OCI-LY7 (cell line): ENCODE measurements at regions of chr18 and their contacts with region 1.

Region 1: DNA sequence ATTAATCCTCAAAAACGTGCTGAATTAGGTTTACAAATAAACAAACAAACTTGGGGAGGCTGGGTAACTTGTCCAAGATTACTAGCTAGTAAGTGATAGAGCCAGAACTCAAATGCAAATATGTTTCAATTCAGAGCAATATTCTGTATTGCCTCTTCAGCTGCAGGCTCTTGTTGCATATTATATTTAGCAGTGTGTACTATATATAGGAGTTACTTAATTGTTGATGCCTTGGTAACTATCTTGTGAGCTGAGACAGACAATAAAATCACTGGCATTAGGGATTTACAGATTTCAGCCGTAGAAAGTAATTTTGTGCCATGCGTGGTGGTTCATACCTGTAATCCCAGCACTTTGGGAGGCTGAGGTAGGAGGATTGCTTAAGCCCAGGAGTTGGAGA is 10.2 kb upstream of the ANKRD12 start:
- DNase-seq: no peak
- H3K4me3 ChIP-seq: no peak overlapping the region
- H3K27ac ChIP-seq: no peak overlapping the region
- H3K4me1 ChIP-seq: no peaks in the 10 kb centered on the region
- CTCF ChIP-seq: no peak

Region 2: DNA sequence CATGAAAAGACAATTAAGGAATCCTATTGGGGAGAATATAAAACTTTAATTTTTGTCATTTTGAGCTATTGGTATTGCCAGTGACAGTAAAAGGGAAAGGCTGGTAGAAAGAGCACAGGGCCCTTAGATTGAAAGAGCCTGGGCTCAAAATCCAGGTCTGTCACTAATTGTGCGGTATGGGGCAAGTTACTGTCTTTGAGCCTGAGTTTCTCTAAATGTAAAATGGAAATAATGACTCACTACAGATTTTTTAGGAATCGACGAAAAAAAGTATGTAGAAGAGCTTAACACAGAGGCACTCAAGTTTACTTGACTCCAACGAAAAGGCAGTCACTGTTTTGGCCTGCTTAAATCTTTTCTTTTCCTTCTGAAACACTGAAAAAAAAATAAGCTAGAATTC is 16.8 kb before region 1 on chr18:
- CTCF ChIA-PET with region 1: interaction called, 4 read pairs
- POLR2A ChIA-PET with region 1: interaction called, 33 read pairs
- intact Hi-C with region 1: no loop called
- DNase-seq: no peak
- H3K4me3 ChIP-seq: no peak overlapping the region
- H3K27ac ChIP-seq: no peak overlapping the region
- H3K4me1 ChIP-seq: peaks cover 58% of the 10 kb centered on the region
- CTCF ChIP-seq: no peak

Region 3: DNA sequence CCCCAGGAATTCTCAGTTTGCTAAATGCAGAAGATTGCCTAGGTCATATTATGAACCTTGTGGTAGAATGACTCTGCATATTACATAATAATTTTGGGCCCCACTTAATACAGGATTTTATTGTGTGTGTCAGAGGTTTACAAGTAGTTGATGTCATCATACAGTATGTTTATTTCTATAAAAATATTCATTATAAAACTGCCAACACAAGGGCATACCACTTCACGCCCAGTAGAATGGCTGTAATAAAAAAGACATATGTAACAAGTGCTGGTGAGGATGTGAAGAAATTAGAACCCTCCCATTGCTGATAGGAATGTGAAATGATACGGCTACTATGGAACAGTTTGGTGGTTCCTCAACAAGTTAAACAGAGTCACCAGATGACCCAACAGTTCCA is 146.9 kb after region 1 on chr18:
- CTCF ChIA-PET with region 1: no interaction called
- POLR2A ChIA-PET with region 1: no interaction called
- intact Hi-C with region 1: no loop called
- DNase-seq: no peak
- H3K4me3 ChIP-seq: no peak overlapping the region
- H3K27ac ChIP-seq: no peak overlapping the region
- H3K4me1 ChIP-seq: no peaks in the 10 kb centered on the region
- CTCF ChIP-seq: no peak